ENCODE measurements at regions of chr3 and their contacts with region 1.

Region 1: DNA sequence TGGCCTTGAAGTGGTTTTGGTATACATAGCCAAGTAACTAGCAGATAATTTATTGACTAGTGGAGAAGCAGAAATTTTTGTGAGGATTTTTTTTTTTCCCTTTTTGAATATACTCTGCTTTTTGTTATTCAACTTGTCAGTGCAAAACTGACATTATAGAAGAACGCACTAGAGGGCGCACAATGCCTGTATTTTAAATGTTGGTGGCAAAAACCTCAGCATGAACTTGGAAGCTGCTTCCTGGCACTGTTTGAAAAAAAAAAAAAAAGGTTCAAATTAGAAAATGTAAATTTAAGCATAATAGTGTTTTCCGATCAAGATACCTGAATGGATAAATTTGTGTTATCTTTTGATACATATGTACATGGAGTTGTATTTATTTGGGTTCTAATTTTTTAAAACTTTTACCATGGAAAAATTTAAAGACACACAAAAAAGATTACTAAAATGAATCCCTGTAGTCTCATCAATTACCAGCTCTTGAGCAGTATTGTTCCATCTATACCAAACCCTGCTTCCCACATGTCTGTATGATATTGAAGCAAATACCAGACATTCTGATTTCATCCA is 56.0 kb downstream of the SLC25A26 start:
- DNase-seq: peak; percentile 24 to 84 (median 53)
- ATAC-seq: peak; percentile 67
- H3K4me3 ChIP-seq: no peak overlapping the region
- H3K4me3 Mint-ChIP-seq: no peak overlapping the region
- H3K27ac ChIP-seq: no peak overlapping the region
- H3K27ac Mint-ChIP-seq: peak overlapping the region; percentile 17
- H3K4me1 ChIP-seq: no peaks in the 10 kb centered on the region
- H3K4me1 Mint-ChIP-seq: peaks cover 41% of the 10 kb centered on the region
- H3K27me3 ChIP-seq: no peaks in the 10 kb centered on the region
- H3K27me3 Mint-ChIP-seq: no peaks in the 10 kb centered on the region
- CTCF ChIP-seq: peak; percentile 90

Region 2: GRCh38 chr3:66179793-66180192 is 97.0 kb before region 1 on chr3:
- CTCF ChIA-PET with region 1: no interaction called
- POLR2A ChIA-PET with region 1: no interaction called
- intact Hi-C with region 1: no loop called
- DNase-seq: no peak
- ATAC-seq: no peak
- H3K4me3 ChIP-seq: no peak overlapping the region
- H3K4me3 Mint-ChIP-seq: no peak overlapping the region
- H3K27ac ChIP-seq: no peak overlapping the region
- H3K27ac Mint-ChIP-seq: no peak overlapping the region
- H3K4me1 ChIP-seq: no peaks in the 10 kb centered on the region
- H3K4me1 Mint-ChIP-seq: no peaks in the 10 kb centered on the region
- H3K27me3 ChIP-seq: no peaks in the 10 kb centered on the region
- H3K27me3 Mint-ChIP-seq: no peaks in the 10 kb centered on the region
- CTCF ChIP-seq: no peak

Region 3: DNA sequence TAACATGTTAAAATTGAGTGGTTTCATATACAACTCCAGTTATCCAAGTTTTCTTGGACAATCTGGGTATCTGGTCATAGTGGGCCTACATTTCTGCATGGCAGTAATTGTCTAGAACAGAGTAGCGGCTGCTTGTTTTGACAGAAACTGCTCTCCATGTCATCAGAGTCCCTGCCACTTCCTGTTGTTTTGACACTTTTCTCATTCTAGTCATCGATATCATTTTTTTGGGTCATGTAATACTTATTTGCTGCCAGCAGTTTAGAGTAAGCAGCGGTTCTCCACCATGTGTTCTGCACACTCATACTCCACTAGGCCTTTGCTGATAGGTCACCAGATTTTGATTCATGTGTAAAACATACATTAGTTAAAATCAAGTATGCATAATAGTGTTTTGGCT is 25.5 kb after region 1 on chr3:
- CTCF ChIA-PET with region 1: interaction called, 7 read pairs
- POLR2A ChIA-PET with region 1: interaction called, 6 read pairs
- intact Hi-C with region 1: loop called in 1 of 2 experiments (anchors 2 kb)
- DNase-seq: peak in 12 of 14 experiments; percentile 9 to 92 (median 40)
- ATAC-seq: peak; percentile 80
- H3K4me3 ChIP-seq: no peak overlapping the region
- H3K4me3 Mint-ChIP-seq: peak overlapping the region; percentile 47
- H3K27ac ChIP-seq: peak overlapping the region; percentile 71 to 85
- H3K27ac Mint-ChIP-seq: peak overlapping the region; percentile 98
- H3K4me1 ChIP-seq: peaks cover 40% of the 10 kb centered on the region
- H3K4me1 Mint-ChIP-seq: peaks cover 81% of the 10 kb centered on the region
- H3K27me3 ChIP-seq: no peaks in the 10 kb centered on the region
- H3K27me3 Mint-ChIP-seq: no peaks in the 10 kb centered on the region
- CTCF ChIP-seq: no peak

Region 4: DNA sequence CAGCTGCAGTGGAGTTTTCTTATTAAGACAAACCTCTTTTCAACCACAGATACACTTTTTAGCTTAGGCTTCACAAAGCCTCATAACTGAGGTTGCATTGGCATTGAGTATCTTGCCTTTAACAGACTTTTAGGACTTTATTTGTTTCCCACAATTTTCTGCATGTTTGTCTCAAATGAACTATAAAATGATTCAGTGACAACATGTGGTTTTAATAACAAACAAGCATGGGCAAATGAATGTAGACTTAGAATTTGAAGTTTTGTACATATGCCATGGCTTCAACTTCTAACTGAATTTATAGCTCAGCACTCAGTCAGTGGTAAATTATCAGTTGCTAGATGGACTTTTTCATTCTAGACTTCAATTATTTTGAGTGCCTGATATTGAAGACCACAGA is 45.6 kb after region 1 on chr3:
- CTCF ChIA-PET with region 1: interaction called, 3 read pairs
- POLR2A ChIA-PET with region 1: no interaction called
- intact Hi-C with region 1: loop called in 1 of 2 experiments (anchors 5 kb)
- DNase-seq: no peak
- ATAC-seq: no peak
- H3K4me3 ChIP-seq: no peak overlapping the region
- H3K4me3 Mint-ChIP-seq: no peak overlapping the region
- H3K27ac ChIP-seq: no peak overlapping the region
- H3K27ac Mint-ChIP-seq: no peak overlapping the region
- H3K4me1 ChIP-seq: peaks cover 6% of the 10 kb centered on the region
- H3K4me1 Mint-ChIP-seq: peaks cover 27% of the 10 kb centered on the region
- H3K27me3 ChIP-seq: no peaks in the 10 kb centered on the region
- H3K27me3 Mint-ChIP-seq: no peaks in the 10 kb centered on the region
- CTCF ChIP-seq: no peak

Region 5: GRCh38 chr3:66372681-66373350 is 96.0 kb after region 1 on chr3:
- CTCF ChIA-PET with region 1: interaction called, 30 read pairs
- POLR2A ChIA-PET with region 1: interaction called, 3 read pairs
- intact Hi-C with region 1: loop called (anchors 1 kb)
- DNase-seq: peak; percentile 21 to 67 (median 46)
- ATAC-seq: peak; percentile 70
- H3K4me3 ChIP-seq: no peak overlapping the region
- H3K4me3 Mint-ChIP-seq: no peak overlapping the region
- H3K27ac ChIP-seq: no peak overlapping the region
- H3K27ac Mint-ChIP-seq: peak overlapping the region; percentile 13
- H3K4me1 ChIP-seq: peaks cover 9% of the 10 kb centered on the region
- H3K4me1 Mint-ChIP-seq: peaks cover 11% of the 10 kb centered on the region
- H3K27me3 ChIP-seq: no peaks in the 10 kb centered on the region
- H3K27me3 Mint-ChIP-seq: no peaks in the 10 kb centered on the region
- CTCF ChIP-seq: peak; percentile 17

Region 6: DNA sequence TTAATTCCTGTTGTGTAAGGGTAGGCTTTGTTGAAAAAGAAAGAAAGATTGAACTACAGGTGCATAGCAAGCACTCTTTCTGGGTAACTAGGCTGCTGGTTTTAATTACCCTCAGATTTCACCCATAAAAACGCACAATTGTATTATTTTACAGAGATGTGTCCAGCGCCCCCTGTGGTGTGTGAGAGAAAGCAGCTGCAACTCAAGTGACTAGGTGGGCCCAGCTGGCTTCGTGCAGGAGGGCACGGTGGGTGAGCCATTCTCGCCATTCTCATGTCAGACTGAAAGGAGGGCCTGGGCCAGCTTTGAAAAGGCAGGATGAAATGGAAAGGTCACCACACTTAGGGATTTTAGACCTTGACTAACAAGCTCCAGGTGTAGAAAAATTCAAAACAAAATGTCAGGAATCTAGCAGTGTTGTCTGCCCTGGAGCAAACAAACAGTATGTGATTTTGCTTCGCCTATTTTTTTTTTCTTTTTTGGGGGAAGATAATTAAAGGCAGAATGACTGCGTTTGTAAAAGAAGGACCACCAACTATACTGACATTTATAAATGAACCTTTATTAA is 101.5 kb after region 1 on chr3:
- CTCF ChIA-PET with region 1: interaction called, 30 read pairs
- POLR2A ChIA-PET with region 1: interaction called, 3 read pairs
- intact Hi-C with region 1: loop called in 1 of 2 experiments (anchors 1 kb)
- DNase-seq: peak in 13 of 14 experiments; percentile 19 to 75 (median 39)
- ATAC-seq: peak; percentile 72
- H3K4me3 ChIP-seq: no peak overlapping the region
- H3K4me3 Mint-ChIP-seq: no peak overlapping the region
- H3K27ac ChIP-seq: peak overlapping the region in 1 of 2 donors; percentile 70
- H3K27ac Mint-ChIP-seq: peak overlapping the region; percentile 85
- H3K4me1 ChIP-seq: peaks cover 14% of the 10 kb centered on the region
- H3K4me1 Mint-ChIP-seq: peaks cover 18% of the 10 kb centered on the region
- H3K27me3 ChIP-seq: no peaks in the 10 kb centered on the region
- H3K27me3 Mint-ChIP-seq: no peaks in the 10 kb centered on the region
- CTCF ChIP-seq: peak; percentile 55

Region 7: DNA sequence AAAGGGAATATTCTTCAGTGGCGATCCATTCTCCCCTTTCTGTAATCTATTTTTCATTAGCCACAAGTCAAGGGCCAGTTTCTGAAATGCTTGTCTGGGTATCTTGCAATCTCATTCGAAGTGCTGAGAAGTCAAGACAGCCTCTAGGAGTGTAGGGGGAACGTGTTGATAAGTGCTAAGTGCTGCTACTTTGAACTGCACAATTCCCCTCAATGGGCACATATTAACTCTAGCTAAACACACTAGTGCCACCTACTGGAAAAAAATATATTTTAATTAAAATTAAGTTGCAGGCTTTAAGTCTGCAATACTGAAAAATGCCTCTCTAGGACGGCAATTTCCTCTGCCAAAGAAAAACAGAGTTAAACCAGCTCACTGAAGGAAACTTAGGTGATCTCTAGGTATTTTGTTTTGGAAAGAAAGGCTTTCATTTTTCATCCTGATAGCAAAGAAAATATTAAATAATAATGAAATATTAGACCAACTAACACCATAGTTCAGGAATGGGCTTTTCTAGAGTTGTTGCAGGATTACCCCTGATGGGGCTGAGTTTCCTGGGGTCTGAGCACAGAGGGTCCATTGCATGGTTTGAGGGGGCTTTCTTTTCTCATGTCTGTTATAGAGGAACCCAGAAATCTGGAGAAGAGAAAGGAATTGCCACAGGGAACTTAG is 539.4 kb after region 1 on chr3:
- CTCF ChIA-PET with region 1: interaction called, 3 read pairs
- POLR2A ChIA-PET with region 1: no interaction called
- intact Hi-C with region 1: loop called (anchors 1 to 2 kb)
- DNase-seq: peak in 5 of 14 experiments; percentile 5 to 65 (median 63)
- ATAC-seq: peak; percentile 62
- H3K4me3 ChIP-seq: no peak overlapping the region
- H3K4me3 Mint-ChIP-seq: no peak overlapping the region
- H3K27ac ChIP-seq: no peak overlapping the region
- H3K27ac Mint-ChIP-seq: no peak overlapping the region
- H3K4me1 ChIP-seq: no peaks in the 10 kb centered on the region
- H3K4me1 Mint-ChIP-seq: no peaks in the 10 kb centered on the region
- H3K27me3 ChIP-seq: no peaks in the 10 kb centered on the region
- H3K27me3 Mint-ChIP-seq: peaks cover 8% of the 10 kb centered on the region
- CTCF ChIP-seq: peak; percentile 74

Measured in CD4-positive, alpha-beta T cell (primary cell).